Common myeloid progenitor, CD34-positive (primary cell): ENCODE measurements at regions of chr2 and their contacts with region 1.

Region 1: DNA sequence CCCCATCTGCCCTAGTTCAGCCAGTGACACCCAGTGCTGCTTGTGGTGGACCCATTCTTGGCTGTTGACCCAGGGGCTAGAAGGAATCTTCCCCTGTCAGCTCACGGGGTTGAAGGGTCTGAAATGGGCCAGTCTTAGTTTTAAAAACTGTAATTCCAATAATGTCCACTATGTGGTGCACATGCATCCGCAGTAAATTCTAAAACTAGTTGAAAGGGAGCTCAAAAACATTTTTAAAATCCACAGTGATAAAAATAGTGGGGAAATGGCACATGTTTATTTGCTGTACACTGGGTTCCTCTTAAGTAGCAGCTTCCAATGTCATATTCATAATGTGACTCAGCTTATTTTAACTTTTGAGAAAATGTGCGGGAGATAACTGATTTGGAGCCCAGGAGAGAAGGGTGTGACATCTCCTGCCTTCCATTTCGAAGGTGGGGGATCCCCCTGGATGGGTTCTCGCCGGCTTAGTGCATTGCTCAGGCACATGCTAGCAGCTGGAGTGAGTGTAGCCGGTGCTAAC is 32.8 kb downstream of the GRHL1 start:
- DNase-seq: peak; percentile 60 to 77 (median 68)
- H3K4me3 ChIP-seq: no peak overlapping the region
- H3K27ac ChIP-seq: no peak overlapping the region
- H3K4me1 ChIP-seq: no peaks in the 10 kb centered on the region
- H3K27me3 ChIP-seq: peaks cover 0 to 4% (median 0%) of the 10 kb centered on the region in 5 experiments

Region 2: DNA sequence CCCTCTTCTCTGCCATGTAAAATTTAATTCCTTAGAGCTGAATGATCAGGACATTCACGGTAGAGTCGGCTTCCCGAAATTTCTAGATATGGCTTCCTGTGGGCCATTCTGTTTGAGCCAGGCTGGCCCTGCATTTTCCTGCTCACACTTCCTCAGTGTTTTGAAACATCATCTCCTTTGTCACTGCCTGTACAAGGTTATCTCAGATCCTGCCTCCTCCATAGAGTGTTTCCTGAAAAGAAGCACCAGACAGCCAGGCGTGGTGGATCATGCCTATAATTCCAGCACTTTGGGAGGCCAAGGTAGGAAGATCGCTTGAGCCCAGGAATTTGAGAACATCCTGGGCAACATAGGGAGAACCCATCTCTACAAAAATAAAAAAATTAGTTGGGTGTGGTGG is 10.8 kb after region 1 on chr2:
- CTCF ChIA-PET with region 1: interaction called, 34 read pairs
- POLR2A ChIA-PET with region 1: no interaction called
- DNase-seq: no peak
- H3K4me3 ChIP-seq: no peak overlapping the region
- H3K27ac ChIP-seq: no peak overlapping the region
- H3K4me1 ChIP-seq: peaks cover 0 to 3% (median 0%) of the 10 kb centered on the region in 4 experiments
- H3K27me3 ChIP-seq: peaks cover 0 to 5% (median 0%) of the 10 kb centered on the region in 5 experiments

Region 3: GRCh38 chr2:10019174-10019573 is 34.9 kb after region 1 on chr2:
- CTCF ChIA-PET with region 1: interaction called, 15 read pairs
- POLR2A ChIA-PET with region 1: interaction called, 3 read pairs
- DNase-seq: no peak
- H3K4me3 ChIP-seq: no peak overlapping the region
- H3K27ac ChIP-seq: no peak overlapping the region
- H3K4me1 ChIP-seq: peaks cover 0 to 4% (median 1%) of the 10 kb centered on the region in 4 experiments
- H3K27me3 ChIP-seq: peaks cover 0 to 5% (median 0%) of the 10 kb centered on the region in 5 experiments

Region 4: GRCh38 chr2:10030311-10030736 is 46.0 kb after region 1 on chr2:
- CTCF ChIA-PET with region 1: interaction called, 11 read pairs
- POLR2A ChIA-PET with region 1: no interaction called
- DNase-seq: no peak
- H3K4me3 ChIP-seq: no peak overlapping the region
- H3K27ac ChIP-seq: peak overlapping the region in 1 of 2 experiments; percentile 40
- H3K4me1 ChIP-seq: peaks cover 6 to 31% (median 23%) of the 10 kb centered on the region in 4 experiments
- H3K27me3 ChIP-seq: no peaks in the 10 kb centered on the region

Region 5: GRCh38 chr2:10036095-10036884 is 52.0 kb after region 1 on chr2:
- CTCF ChIA-PET with region 1: interaction called, 11 read pairs
- POLR2A ChIA-PET with region 1: no interaction called
- DNase-seq: peak; percentile 92 to 98 (median 98)
- H3K4me3 ChIP-seq: peak overlapping the region in 1 of 7 experiments; percentile 38
- H3K27ac ChIP-seq: peak overlapping the region in 1 of 2 experiments; percentile 26
- H3K4me1 ChIP-seq: peaks cover 0 to 37% (median 22%) of the 10 kb centered on the region in 4 experiments
- H3K27me3 ChIP-seq: no peaks in the 10 kb centered on the region

Region 6: DNA sequence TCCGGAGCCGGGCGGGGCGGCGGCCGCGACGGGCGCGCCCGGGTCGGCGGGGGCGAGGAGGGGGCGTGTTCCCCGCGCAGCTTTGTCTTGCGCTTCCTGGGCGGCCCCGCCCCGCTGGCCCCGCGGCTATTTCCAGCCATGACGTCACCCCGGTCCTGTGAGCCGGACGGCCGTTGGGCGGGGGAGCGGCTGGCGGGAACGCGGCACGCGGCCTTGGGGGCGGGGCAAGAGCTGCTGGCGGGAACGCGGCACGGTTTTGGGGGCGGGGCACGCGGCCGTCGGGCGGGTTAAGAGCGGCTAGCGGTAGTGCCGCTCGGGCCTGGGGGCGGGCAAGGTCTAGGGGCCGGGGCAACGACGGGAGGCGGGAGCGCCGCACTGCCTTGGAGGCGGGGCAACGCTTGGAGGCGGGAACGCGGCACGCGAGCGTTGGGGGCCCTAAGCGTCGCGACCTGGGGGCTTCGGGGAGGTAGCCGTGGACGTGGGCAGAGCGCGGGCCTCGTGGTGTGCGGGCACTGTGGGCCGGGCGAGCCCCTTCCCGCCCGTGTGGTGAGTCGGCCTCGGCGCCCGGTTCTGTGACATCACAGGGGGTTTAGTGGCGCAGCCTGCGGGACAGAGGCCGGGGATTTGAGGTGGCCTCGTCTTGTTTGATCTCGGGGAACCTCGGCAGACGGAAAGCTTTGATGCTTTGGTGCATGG is 59.8 kb after region 1 on chr2:
- CTCF ChIA-PET with region 1: interaction called, 106 read pairs
- POLR2A ChIA-PET with region 1: no interaction called
- DNase-seq: peak; percentile 81 to 90 (median 88)
- H3K4me3 ChIP-seq: peak overlapping the region in 4 of 7 experiments; percentile 8 to 67 (median 54)
- H3K27ac ChIP-seq: no peak overlapping the region
- H3K4me1 ChIP-seq: peaks cover 0 to 20% (median 9%) of the 10 kb centered on the region in 4 experiments
- H3K27me3 ChIP-seq: peaks cover 0 to 2% (median 0%) of the 10 kb centered on the region in 5 experiments

Region 7: GRCh38 chr2:10057231-10058107 is 73.2 kb after region 1 on chr2:
- CTCF ChIA-PET with region 1: interaction called, 10 read pairs
- POLR2A ChIA-PET with region 1: no interaction called
- DNase-seq: peak in 2 of 3 donors; percentile 34 to 39
- H3K4me3 ChIP-seq: peak overlapping the region in 4 of 7 experiments; percentile 23 to 69 (median 56)
- H3K27ac ChIP-seq: no peak overlapping the region
- H3K4me1 ChIP-seq: peaks cover 0 to 9% (median 5%) of the 10 kb centered on the region in 4 experiments
- H3K27me3 ChIP-seq: peaks cover 0 to 4% (median 0%) of the 10 kb centered on the region in 5 experiments